Ascending aorta (tissue), 2 donors: ENCODE measurements at regions of chr14 and their contacts with region 1.

Region 1: DNA sequence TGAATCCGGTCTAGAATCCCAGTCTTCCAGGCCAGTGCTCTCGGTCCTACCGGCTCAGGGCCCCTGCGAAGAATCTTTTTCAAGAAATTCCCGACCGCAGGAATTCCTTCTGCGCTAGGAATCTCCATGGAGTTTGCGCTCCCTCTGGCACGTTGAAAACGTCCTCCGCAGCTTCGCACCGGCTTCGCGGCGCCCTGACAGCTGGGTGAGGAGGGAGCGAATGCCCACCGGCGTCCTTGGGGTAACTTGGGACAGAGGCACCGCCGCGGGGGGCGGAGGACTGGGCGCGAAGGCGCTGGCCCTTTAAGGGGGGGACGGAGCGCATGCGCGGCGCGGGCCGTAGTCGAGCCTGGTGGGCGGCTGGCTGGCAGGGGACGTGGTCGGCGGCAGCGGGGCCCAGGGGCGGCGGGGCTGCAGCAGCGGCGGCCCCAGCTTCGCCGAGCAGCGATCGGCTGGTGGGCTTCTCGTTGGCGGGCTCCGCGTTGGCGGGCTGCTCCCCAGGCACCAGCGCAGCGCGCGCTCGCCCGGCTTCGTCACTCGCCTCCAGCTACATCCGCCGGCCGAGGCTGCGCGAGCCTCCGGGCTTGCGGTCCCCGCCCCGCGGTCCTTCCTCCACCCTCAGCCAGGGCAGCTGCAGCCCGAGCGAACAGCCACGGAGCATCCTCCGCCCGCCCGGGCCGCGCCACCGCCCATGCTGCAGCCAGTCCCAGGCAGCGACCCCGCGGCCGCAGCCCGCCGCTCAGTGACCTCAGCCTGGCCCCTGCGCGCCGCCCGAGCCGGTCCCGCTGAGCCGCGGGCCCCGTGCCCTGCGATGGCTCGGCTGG is at the start of gene VASH1:
- DNase-seq: no peak
- H3K4me3 ChIP-seq: peak within 1 kb of the TSS; percentile 84 to 88
- H3K27ac ChIP-seq: peak within 1 kb of the TSS; percentile 74 to 76
- H3K4me1 ChIP-seq: peaks cover 10 to 11% of the 10 kb centered on the region in 2 donors
- H3K27me3 ChIP-seq: no peaks in the 10 kb centered on the region
- CTCF ChIP-seq: no peak
- total RNA-seq, gene VASH1: 28.4 TPM

Region 2: GRCh38 chr14:76591266-76591665 is 170.1 kb before region 1 on chr14:
- intact Hi-C with region 1: no loop called
- DNase-seq: no peak
- H3K4me3 ChIP-seq: no peak overlapping the region
- H3K27ac ChIP-seq: no peak overlapping the region
- H3K4me1 ChIP-seq: no peaks in the 10 kb centered on the region
- H3K27me3 ChIP-seq: no peaks in the 10 kb centered on the region
- CTCF ChIP-seq: no peak

Region 3: DNA sequence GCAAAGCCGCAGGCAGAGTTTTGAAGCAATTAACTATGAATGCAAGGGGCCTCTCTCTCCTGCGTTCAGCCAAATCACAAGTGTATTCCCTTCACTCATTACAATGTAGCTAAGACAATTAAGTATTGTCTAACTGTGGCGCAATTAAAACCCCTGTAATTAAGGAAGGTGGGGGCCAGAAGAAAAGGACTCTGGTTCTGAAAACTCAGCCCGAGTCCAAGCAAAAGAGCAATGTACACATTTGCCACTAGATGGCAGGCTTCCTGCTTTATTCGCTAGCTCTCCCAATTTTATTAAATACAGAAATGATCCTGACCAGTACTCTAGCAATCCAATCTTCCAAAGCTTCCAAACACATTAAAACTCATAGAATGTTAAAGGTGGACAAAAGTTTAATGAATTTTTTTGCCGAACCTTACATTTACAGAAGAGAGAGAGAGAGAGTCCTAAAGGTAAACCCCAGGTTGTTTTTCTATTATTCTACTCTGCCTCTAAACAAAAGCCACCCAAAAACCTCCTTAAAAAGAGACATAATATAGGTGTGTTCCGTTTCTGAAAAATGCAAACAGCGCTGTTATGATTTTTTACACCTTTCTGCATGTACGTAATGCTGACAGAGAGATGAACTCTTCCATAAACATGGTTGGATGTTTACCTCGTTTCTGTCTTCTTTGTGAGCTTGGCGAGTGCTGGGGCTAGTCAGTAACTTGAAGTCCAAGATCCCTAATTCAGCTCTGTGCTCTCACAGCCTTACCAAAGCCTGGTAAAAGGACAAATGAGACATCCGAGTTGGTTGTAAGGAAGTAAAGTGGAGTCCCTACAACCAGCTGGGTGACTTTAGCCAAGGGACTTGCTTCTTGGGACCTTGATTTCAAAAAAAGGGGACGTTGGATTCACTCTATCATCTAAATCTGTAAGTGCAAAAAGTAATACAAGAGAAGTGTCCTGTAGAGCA is 51.0 kb before region 1 on chr14:
- intact Hi-C with region 1: loop called (anchors 5 kb)
- DNase-seq: peak in 1 of 2 donors; percentile 57
- H3K4me3 ChIP-seq: no peak overlapping the region
- H3K27ac ChIP-seq: no peak overlapping the region
- H3K4me1 ChIP-seq: no peaks in the 10 kb centered on the region
- H3K27me3 ChIP-seq: no peaks in the 10 kb centered on the region
- CTCF ChIP-seq: peak; percentile 62 to 70 (median 66)

Region 4: DNA sequence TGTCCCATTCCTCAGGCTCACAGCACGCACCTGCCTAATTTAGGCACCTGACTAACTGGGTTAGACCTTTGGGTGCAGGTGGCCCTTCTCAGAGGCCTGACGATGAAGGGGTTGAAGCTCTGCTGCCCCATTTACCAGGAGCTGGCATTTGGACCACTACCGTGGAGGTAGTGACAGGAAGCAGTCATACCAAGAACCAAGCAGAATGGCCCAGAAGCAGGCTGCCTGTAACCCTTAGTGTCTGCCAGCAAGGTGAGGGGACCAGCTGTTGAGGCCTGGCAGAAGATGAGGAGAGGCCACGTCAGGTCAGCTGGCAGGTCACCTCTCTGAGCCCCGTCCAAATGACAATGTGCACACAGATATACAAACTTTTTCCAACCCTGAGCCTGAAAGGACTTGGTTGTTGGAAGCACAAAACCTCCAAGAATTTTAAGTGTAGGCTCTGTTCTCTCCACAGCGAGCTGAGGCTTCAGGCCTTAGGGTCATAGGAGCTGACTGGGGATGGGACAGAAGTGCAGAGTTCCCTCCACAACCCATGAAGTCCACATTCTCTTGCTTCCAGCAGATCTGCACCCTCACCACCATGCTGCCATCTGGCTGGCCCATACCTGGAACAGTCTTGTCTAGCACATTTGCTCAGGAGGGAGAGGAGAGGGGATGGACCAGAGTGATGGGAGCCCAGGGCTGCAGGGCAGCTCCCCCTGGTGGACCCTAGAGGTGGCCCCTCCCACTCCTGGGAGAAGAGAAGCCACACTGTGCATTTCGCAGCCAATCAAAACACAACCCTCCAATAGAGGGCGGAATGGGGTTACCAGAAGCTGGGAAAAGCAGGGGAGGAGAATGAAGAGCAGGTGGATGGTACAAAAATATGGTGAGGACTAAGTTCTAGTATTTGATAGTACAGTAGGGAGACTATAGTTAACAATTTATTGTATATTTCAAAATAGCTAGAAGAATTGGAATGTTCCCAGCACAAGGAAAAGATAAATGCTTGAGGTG is 23.2 kb after region 1 on chr14:
- intact Hi-C with region 1: loop called (anchors 2 kb)
- DNase-seq: peak in 1 of 2 donors; percentile 92
- H3K4me3 ChIP-seq: no peak overlapping the region
- H3K27ac ChIP-seq: peak overlapping the region; percentile 40 to 59
- H3K4me1 ChIP-seq: peaks cover 0 to 10% of the 10 kb centered on the region in 2 donors
- H3K27me3 ChIP-seq: no peaks in the 10 kb centered on the region
- CTCF ChIP-seq: peak; percentile 83 to 92 (median 89)

Region 5: DNA sequence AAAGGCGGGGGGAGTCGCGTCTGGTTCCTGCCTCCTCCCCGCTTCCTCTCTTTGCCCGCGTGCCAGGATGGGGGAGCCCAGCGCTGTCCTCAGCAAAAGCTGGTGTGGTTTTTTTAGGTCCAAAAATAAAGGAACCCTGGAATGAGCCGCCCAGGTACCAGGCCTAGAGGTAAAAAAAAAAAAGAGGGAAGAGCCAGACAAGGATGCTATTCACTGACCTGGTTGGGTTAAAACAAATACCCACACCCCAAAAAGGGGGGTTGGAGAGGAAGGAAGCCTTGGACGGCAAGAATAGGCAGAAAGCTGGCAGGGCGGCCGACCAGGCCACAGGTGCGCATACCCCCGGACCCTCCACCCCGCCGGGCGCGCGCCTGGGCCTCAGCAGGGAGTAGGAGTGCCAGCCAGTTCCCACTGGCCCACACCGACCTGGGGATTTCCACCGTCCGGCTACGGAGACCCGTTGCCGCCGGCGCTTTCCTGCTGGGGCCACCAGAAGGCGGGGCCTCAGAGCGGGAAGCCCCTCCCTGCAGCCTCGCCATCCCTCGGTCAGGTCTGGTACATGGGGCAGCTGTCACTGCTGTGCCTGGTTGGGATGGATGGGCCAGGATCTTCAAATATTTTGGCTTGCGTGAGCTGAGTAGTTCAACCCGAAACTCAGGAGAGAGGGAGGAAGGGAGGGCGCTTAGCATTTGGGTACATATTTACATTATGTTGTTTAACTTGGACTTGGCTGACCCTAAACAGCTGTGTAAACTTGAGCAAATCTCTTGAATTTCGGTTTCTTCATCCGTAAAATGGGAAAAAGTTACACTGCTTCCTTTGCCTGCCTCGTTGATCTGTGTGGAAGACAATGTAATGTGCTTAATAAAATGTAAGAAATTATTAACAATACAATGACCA is 272.5 kb after region 1 on chr14:
- intact Hi-C with region 1: loop called (anchors 10 kb)
- DNase-seq: peak in 1 of 2 donors; percentile 93
- H3K4me3 ChIP-seq: peak overlapping the region; percentile 67 to 72
- H3K27ac ChIP-seq: peak overlapping the region; percentile 99 to 100
- H3K4me1 ChIP-seq: peaks cover 16 to 70% of the 10 kb centered on the region in 2 donors
- H3K27me3 ChIP-seq: no peaks in the 10 kb centered on the region
- CTCF ChIP-seq: no peak

Region 6: DNA sequence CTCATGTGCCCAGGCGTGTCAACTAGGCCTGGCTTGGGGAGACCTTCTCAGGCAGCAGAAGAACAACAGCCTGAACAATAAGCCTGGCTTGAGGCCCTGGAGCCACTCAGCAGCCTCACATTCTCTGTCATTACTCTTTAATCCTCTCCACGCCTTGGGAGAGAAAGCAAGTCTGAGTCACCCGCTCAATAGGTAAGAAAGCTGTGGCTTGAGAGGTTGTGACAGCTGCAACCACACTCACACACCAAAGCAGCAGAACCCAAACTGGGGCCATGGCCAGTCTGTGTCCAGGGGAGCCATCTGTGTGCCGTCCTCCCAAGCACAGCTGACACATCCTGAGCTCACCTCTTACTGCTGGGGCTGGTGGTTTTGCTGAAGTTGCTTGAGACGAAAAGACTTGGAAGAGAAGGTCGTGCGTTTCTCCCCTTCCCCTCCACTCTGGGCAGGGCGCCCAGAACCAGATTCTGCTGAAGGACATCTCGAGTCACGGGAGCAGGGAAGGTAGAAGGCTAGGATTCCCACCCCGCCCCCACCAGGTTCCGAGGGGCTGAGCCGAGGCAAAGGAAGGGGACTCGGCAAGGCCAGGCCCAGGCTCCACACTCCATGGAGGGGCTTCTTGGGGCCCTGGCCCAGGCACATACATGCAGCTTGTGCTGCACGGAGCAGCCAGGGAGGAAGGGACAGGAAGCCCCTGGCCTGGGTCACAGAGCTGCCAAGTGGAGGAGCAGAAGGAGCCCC is 425.7 kb after region 1 on chr14:
- intact Hi-C with region 1: no loop called
- DNase-seq: no peak
- H3K4me3 ChIP-seq: no peak overlapping the region
- H3K27ac ChIP-seq: no peak overlapping the region
- H3K4me1 ChIP-seq: peaks cover 0 to 4% of the 10 kb centered on the region in 2 donors
- H3K27me3 ChIP-seq: no peaks in the 10 kb centered on the region
- CTCF ChIP-seq: no peak

Region 7: DNA sequence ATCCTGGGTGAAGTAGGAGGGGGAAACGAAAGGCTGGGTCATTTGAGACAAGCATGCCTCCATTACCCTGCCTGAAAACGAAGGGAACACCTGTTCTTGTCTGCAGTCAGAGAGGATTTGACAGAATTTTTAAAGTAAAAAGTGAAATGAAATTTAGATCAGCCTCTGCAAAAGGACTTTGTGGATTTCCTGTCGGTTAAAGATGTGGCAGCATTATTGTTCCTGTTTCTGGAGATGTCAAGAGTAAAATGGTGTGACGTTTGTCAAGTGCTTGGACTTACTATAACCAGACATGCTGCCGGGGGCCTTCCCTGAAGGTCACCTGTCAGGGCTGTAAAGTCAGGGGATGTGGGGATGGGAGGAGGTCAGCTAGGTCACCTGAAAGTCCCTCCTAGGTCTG is 1440.8 kb after region 1 on chr14:
- intact Hi-C with region 1: no loop called
- DNase-seq: no peak
- H3K4me3 ChIP-seq: no peak overlapping the region
- H3K27ac ChIP-seq: no peak overlapping the region
- H3K4me1 ChIP-seq: no peaks in the 10 kb centered on the region
- H3K27me3 ChIP-seq: no peaks in the 10 kb centered on the region
- CTCF ChIP-seq: no peak